CD8-positive, alpha-beta memory T cell (primary cell): ENCODE measurements at regions of chr2 and their contacts with region 1.

Region 1: GRCh38 chr2:196259507-196260481 is 88.4 kb upstream of the STK17B start:
- DNase-seq: peak in 1 of 5 donors; percentile 44
- H3K4me3 ChIP-seq: peak overlapping the region; percentile 60
- H3K4me3 Mint-ChIP-seq: peak overlapping the region; percentile 30 to 75 (median 68)
- H3K27ac ChIP-seq: peak overlapping the region; percentile 55
- H3K27ac Mint-ChIP-seq: peak overlapping the region; percentile 73 to 95 (median 92)
- H3K4me1 ChIP-seq: peaks cover 63% of the 10 kb centered on the region
- H3K4me1 Mint-ChIP-seq: peaks cover 53 to 77% (median 74%) of the 10 kb centered on the region in 3 donors
- H3K27me3 ChIP-seq: no peaks in the 10 kb centered on the region
- H3K27me3 Mint-ChIP-seq: no peaks in the 10 kb centered on the region

Region 2: GRCh38 chr2:195601361-195601760 is 658.4 kb before region 1 on chr2:
- CTCF ChIA-PET with region 1: no interaction called
- POLR2A ChIA-PET with region 1: no interaction called
- DNase-seq: no peak
- H3K4me3 ChIP-seq: no peak overlapping the region
- H3K4me3 Mint-ChIP-seq: no peak overlapping the region
- H3K27ac ChIP-seq: no peak overlapping the region
- H3K27ac Mint-ChIP-seq: peak overlapping the region in 1 of 8 donors; percentile 48
- H3K4me1 ChIP-seq: no peaks in the 10 kb centered on the region
- H3K4me1 Mint-ChIP-seq: peaks cover 7 to 16% (median 15%) of the 10 kb centered on the region in 3 donors
- H3K27me3 ChIP-seq: no peaks in the 10 kb centered on the region
- H3K27me3 Mint-ChIP-seq: peaks cover 0 to 2% of the 10 kb centered on the region in 2 donors

Region 3: DNA sequence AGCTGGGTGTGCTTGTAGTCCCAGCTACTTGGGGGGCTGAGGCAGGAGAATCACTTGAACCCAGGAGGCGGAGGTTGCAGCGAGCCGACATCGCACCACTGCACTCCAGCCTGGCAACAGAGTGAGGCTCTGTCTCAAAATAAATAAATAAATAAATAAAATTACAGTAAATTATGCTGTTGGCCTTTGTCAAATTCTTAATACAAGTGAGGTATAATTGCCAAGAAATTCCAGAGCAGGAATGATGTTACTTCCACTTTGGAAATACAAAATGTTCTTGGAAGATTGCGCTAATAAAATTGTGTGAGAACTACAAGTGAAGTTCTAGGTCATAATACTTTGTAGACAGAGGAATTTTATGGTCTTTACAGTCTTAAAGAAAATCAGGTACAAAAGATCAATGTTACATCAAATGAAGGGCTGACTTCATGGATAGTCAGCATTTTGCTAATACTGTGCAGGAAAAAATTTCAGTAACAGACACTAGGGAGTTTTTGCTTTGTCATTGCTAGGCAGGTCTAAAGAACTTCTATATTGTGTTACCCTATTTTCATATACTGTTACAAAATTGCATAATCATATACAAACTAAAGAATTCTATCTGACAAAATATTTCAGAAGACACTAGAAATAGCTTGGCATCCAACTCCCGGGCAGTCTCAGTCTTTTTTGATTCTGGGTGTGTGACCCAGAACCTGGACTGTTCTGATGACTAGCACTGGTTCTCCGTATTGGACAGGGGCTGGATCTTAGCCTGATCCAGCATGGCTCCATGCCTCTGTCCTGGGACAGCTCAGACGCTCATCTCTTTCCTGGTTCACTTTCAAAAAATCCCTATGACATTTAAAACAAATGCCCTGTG is 12.4 kb before region 1 on chr2:
- CTCF ChIA-PET with region 1: interaction called, 13 read pairs
- POLR2A ChIA-PET with region 1: interaction called, 4 read pairs
- DNase-seq: no peak
- H3K4me3 ChIP-seq: no peak overlapping the region
- H3K4me3 Mint-ChIP-seq: no peak overlapping the region
- H3K27ac ChIP-seq: no peak overlapping the region
- H3K27ac Mint-ChIP-seq: peak overlapping the region in 4 of 8 donors; percentile 13 to 67 (median 34)
- H3K4me1 ChIP-seq: peaks cover 56% of the 10 kb centered on the region
- H3K4me1 Mint-ChIP-seq: peaks cover 39 to 67% (median 58%) of the 10 kb centered on the region in 3 donors
- H3K27me3 ChIP-seq: no peaks in the 10 kb centered on the region
- H3K27me3 Mint-ChIP-seq: no peaks in the 10 kb centered on the region

Region 4: GRCh38 chr2:196314780-196315179 is 55.0 kb after region 1 on chr2:
- CTCF ChIA-PET with region 1: no interaction called
- POLR2A ChIA-PET with region 1: no interaction called
- DNase-seq: no peak
- H3K4me3 ChIP-seq: no peak overlapping the region
- H3K4me3 Mint-ChIP-seq: no peak overlapping the region
- H3K27ac ChIP-seq: no peak overlapping the region
- H3K27ac Mint-ChIP-seq: no peak overlapping the region
- H3K4me1 ChIP-seq: no peaks in the 10 kb centered on the region
- H3K4me1 Mint-ChIP-seq: no peaks in the 10 kb centered on the region
- H3K27me3 ChIP-seq: no peaks in the 10 kb centered on the region
- H3K27me3 Mint-ChIP-seq: no peaks in the 10 kb centered on the region

Region 5: DNA sequence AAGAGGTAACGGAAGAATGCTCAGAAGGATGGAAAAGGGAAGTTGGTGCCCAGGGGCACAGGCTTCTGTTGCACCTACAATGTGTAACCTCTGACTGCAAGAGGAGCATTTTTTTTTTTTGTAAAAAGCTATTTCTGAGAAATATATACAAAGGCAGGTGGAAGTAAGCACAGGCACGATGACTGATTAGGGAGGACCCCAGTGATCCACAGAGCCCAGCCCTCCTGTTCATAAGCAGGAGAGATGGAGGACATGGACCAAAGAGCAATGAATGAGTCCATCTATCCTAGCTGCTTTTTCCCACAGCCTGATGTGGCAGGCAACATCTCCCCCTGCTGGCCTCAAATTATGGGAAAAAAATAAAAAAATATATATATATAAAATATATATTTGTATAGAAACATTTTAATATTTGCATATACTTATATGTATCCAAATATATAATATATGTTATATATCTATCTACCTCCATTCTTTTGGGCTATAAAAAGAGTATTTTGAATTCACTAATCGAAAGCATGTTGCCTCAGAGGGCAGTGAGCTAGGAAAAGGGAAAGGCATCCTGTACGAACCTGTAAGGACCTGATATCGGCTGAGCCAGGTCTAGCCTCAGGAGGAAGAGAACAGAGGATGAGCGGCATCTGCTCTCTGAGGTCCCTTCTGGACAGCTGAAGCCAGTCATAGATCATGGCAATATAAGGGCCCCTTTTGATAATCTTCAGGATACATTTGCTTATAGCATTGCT is 77.6 kb after region 1 on chr2:
- CTCF ChIA-PET with region 1: no interaction called
- POLR2A ChIA-PET with region 1: no interaction called
- DNase-seq: peak in 2 of 5 donors; percentile 2 to 23
- H3K4me3 ChIP-seq: no peak overlapping the region
- H3K4me3 Mint-ChIP-seq: no peak overlapping the region
- H3K27ac ChIP-seq: no peak overlapping the region
- H3K27ac Mint-ChIP-seq: peak overlapping the region in 1 of 8 donors; percentile 34
- H3K4me1 ChIP-seq: no peaks in the 10 kb centered on the region
- H3K4me1 Mint-ChIP-seq: peaks cover 0 to 4% (median 0%) of the 10 kb centered on the region in 3 donors
- H3K27me3 ChIP-seq: no peaks in the 10 kb centered on the region
- H3K27me3 Mint-ChIP-seq: peaks cover 3 to 14% of the 10 kb centered on the region in 2 donors